Activated CD8-positive, alpha-beta T cell treated with anti-CD3 and anti-CD28 coated beads for 36 hours (primary cell): ENCODE measurements at regions of chr9 and their contacts with region 1.

Region 1: GRCh38 chr9:96854073-96854876 is at the start of gene ZNF782:
- DNase-seq: peak; percentile 91
- ATAC-seq: peak; percentile 89
- H3K4me3 Mint-ChIP-seq: peak within 1 kb of the TSS; percentile 96
- H3K27ac Mint-ChIP-seq: peak within 1 kb of the TSS; percentile 99
- H3K4me1 Mint-ChIP-seq: peaks cover 59% of the 10 kb centered on the region
- H3K27me3 Mint-ChIP-seq: peaks cover 15% of the 10 kb centered on the region
- CTCF ChIP-seq: no peak
- total RNA-seq, gene ZNF782: 4.7 to 5.0 TPM

Region 2: GRCh38 chr9:96867079-96867804 is 13.0 kb after region 1 on chr9:
- CTCF ChIA-PET with region 1: interaction called, 43 read pairs
- POLR2A ChIA-PET with region 1: interaction called, 4 read pairs
- intact Hi-C with region 1: no loop called
- DNase-seq: no peak
- ATAC-seq: no peak
- H3K4me3 Mint-ChIP-seq: no peak overlapping the region
- H3K27ac Mint-ChIP-seq: no peak overlapping the region
- H3K4me1 Mint-ChIP-seq: no peaks in the 10 kb centered on the region
- H3K27me3 Mint-ChIP-seq: peaks cover 4% of the 10 kb centered on the region
- CTCF ChIP-seq: no peak

Region 3: DNA sequence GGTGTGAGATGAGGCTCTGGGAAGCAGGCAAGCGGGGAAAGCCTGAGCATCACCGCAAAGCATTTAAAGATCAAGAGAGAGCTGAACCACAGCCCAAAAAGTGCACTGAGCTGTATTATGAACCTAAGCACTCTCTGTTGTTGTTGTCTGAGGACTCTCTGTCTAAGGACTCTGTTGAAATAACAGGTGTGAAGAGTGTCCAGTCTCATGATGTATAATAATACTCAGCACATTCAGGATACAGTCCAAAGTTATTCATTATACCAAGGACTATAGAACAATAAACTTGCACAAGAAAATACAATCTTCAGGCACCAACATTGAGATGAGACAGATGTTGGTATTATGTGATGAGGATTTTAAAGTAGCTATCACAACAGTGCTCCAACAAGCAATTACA is 256.4 kb after region 1 on chr9:
- CTCF ChIA-PET with region 1: interaction called, 10 read pairs
- POLR2A ChIA-PET with region 1: no interaction called
- intact Hi-C with region 1: loop called (anchors 10 kb)
- DNase-seq: no peak
- ATAC-seq: no peak
- H3K4me3 Mint-ChIP-seq: no peak overlapping the region
- H3K27ac Mint-ChIP-seq: no peak overlapping the region
- H3K4me1 Mint-ChIP-seq: no peaks in the 10 kb centered on the region
- H3K27me3 Mint-ChIP-seq: peaks cover 2% of the 10 kb centered on the region
- CTCF ChIP-seq: no peak

Region 4: DNA sequence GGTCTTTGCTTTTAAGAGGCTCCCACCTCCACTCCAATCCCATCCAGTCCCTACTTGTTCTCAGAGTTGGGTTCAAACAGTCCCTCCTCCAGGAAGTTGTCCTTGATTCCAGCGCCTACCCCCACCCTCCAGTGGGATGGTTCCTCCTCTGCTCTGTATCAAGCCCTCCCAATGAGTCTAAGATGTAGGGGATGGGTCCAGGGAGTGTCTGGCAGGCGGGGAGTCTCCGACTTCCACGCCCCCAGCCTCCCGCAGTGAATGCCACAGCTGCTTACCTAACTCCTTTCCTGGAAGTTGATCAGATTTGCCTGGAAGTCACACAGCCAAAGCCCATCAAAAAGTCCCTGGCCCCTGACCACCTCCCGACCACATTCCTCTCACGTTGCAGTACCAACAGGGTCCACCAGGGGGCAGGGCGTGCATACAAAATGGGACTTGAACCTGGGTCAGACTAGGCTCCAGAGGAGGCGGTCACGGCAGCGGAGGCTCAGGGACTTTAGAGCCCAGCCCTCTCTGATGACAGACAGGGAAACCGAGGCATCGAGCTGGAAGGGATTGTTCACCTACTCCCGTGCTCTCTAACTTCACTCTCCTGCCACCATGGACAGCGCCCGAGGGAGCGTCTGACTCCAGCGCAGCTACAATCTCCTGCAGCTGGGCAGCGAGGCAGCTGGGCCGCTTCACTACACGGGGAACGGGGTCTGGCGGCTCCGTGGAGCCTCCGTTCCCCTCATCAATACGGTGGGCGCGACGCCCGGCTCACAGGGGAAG is 532.6 kb after region 1 on chr9:
- CTCF ChIA-PET with region 1: interaction called, 10 read pairs
- POLR2A ChIA-PET with region 1: no interaction called
- intact Hi-C with region 1: no loop called
- DNase-seq: peak; percentile 87
- ATAC-seq: peak; percentile 68
- H3K4me3 Mint-ChIP-seq: no peak overlapping the region
- H3K27ac Mint-ChIP-seq: no peak overlapping the region
- H3K4me1 Mint-ChIP-seq: peaks cover 12% of the 10 kb centered on the region
- H3K27me3 Mint-ChIP-seq: peaks cover 7% of the 10 kb centered on the region
- CTCF ChIP-seq: peak; percentile 98

Region 5: GRCh38 chr9:97411789-97412625 is 557.7 kb after region 1 on chr9 and contains the start of gene TDRD7:
- CTCF ChIA-PET with region 1: interaction called, 10 read pairs
- POLR2A ChIA-PET with region 1: no interaction called
- intact Hi-C with region 1: no loop called
- DNase-seq: peak; percentile 86
- ATAC-seq: peak; percentile 89
- H3K4me3 Mint-ChIP-seq: peak within 1 kb of the TSS; percentile 84
- H3K27ac Mint-ChIP-seq: peak within 1 kb of the TSS; percentile 81
- H3K4me1 Mint-ChIP-seq: peaks cover 21% of the 10 kb centered on the region
- H3K27me3 Mint-ChIP-seq: peaks cover 19% of the 10 kb centered on the region
- CTCF ChIP-seq: peak; percentile 99
- total RNA-seq, gene TDRD7: 3.7 to 4.0 TPM